Head of caudate nucleus (tissue), 42 donors: ENCODE measurements at regions of chr5 and their contacts with region 1.

Region 1: GRCh38 chr5:32312647-32313523 is at the start of gene MTMR12:
- DNase-seq: peak; percentile 99 to 100 (median 100)

Region 2: DNA sequence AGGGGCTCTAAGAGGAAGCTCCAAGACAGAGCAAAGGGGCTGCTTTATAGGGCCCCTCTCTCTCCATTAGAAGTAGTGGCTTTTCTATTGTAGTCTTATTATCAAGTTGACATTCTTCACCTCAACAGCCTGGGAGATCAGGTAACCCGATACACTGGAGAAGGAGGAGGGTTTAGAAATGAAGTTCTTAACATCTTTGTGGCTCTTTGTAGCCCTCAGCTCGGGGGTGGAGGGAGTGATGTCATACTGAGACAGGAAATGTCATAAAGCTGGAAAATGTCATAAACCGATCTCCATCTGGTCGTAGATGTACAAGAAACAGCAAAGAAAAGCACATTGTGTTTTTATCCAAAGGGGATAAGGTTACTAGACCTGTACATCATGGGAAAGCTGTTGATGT is 656.1 kb before region 1 on chr5:
- intact Hi-C with region 1: no loop called
- DNase-seq: no peak

Region 3: GRCh38 chr5:32174011-32174870 is 138.6 kb before region 1 on chr5 and contains the start of gene GOLPH3:
- intact Hi-C with region 1: loop called (anchors 10 kb)
- DNase-seq: peak; percentile 80 to 97 (median 93)

Region 4: DNA sequence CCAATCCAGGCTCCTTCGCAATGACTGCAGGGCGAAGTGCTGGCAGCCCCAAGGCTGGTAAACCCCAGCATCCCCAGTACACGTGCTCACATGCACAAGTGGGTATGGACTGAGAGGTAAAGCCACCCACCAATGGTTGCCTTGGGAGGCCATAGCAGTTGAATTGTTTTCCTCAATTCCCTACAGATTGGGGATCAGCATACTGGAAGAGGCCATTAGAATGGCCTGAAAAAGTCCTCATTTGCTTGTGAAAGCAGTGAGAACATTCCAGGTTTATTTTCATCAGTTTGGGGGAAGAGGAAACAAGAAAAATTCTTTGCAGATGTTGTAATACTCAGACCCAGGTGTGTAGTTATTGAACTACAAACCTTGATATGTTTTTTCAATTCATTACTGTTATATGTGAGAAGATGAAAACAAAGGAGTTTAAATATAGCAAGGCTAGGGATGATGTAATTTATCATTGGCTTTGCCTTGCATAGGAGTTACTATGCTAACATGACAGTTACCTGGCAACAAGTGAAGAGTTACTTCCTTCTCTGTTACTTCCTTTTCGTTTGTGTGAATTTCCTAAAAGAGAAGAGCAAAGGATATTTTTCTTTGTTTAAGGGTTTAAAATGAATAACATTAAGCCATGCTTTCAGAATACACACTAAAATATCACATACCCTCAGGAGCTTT is 36.6 kb before region 1 on chr5:
- intact Hi-C with region 1: loop called (anchors 5 kb)
- DNase-seq: peak in 1 of 42 donors; percentile 32

Region 5: GRCh38 chr5:32444431-32445286 is 131.8 kb after region 1 on chr5 and contains the start of gene ZFR:
- intact Hi-C with region 1: loop called (anchors 5 kb)
- DNase-seq: peak; percentile 81 to 97 (median 94)

Region 6: DNA sequence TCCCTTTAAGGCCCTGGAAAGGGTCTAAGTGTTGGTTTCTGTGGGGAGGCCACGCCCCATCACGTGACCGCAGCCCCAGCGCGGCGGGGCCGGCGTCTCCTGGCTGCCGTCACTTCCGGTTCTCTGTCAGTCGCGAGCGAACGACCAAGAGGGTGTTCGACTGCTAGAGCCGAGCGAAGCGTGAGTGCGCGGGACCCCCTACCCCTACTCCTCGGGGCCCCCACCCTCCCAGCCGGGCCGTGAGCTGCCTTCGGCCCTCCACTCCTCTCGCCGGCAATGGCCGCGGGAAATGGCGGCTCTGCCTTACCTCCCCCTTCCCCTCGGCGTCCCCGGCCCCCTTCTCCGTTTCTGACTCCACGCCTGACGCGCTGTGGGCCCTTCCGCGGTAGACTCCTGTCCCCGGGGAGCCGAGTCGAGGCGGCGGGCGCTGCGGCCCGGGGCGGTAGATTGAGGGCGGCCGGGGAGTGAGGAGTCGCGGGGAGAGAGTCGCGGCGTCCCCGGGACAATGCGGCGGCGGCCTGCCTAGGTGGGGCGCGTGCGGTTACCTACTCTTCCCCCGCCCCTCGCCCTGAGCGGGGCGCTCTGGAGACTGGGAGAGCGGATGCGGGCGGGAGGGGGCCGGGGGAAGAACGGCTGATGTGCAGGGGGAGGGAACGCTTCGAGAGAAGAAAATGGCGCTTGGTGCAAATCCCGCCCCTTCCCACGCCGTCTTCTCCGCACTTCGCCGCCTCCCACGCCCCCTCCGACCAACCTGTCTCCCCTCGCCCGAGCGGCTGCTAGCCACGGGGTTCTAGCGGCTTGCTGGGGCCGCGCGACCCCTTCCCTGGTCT is 272.8 kb after region 1 on chr5 and contains the start of gene SUB1:
- intact Hi-C with region 1: loop called (anchors 5 kb)
- DNase-seq: peak; percentile 91 to 98 (median 97)